ENCODE measurements at regions of chr2 and their contacts with region 1.

Region 1: DNA sequence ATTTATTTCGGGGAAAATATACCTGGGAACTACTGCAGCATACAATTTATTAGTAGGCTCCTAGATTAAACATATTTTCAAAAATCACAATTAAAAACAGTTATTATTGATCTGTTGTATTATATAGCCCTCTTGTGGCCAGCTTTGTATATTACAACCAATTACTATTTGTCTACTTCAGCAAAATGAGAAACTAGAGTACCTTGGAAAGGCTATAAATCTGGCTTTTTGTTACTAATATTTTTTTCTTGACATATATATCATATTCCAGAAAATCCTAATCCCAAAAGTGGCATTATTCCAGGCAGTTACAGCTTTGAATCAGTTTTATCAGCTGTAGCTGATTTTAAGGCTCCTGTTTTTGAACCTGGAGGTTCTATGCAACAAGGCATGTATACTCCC is 101.2 kb downstream of the UBR3 start:
- DNase-seq: no peak
- H3K4me3 ChIP-seq: no peak overlapping the region
- H3K27ac ChIP-seq: no peak overlapping the region
- H3K4me1 ChIP-seq: no peaks in the 10 kb centered on the region
- H3K27me3 ChIP-seq: no peaks in the 10 kb centered on the region
- CTCF ChIP-seq: peak; percentile 48 to 77 (median 71)
- POLR2A ChIP-seq: no peak

Region 2: DNA sequence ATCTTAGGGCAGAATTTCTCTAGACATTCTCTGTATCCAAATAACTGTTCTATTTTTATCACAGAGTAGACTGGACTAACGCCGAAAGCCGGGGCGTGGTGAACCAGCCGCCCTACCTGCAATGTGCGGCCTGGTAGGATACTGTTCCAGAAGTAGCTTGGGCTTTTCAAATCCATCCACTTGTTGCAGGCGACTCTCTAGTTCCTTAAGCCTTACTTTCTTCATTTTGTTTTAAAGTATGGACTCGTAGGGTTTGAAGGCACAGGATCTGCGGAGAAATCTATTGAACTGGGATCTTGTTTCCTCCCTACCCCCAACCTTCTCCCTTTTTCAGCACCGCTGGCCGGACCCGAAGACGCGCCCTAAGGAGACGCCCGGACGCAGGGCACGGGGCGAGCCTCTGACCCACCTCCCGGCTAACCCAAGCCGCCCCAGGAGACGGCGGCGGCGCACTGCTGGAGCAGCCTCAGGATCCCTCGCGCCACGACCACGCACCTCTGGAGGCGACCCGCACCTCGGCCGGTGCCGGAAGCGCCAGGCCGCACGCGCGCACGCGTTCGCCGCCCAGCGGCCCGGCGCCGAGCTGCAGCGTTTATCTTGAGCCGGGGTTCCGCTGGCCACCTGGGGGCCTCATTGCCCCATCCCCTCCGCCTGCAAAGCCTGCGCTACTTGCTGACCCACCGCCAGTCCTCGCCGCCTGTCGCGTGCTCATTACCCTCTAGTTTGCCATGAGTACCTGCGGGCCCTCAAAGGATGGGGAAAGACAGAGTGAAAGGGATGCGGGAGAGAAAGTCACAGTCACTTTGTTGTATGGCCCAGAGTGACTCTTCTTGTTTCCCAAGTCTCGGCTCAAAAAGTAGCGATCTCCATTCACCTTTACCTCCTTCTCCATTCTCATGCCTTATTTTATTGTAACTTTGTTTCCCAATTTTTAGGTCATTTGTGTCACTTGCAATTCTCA is 103.8 kb before region 1 on chr2 and contains the start of gene METTL5:
- intact Hi-C with region 1: loop called (anchors 10 kb)
- DNase-seq: no peak
- H3K4me3 ChIP-seq: peak within 1 kb of the TSS; percentile 60 to 91 (median 86)
- H3K27ac ChIP-seq: peak within 1 kb of the TSS; percentile 80 to 91 (median 86)
- H3K4me1 ChIP-seq: peaks cover 22 to 71% (median 28%) of the 10 kb centered on the region in 3 donors
- H3K27me3 ChIP-seq: no peaks in the 10 kb centered on the region
- CTCF ChIP-seq: peak; percentile 84 to 97 (median 90)
- POLR2A ChIP-seq: peak in 2 of 4 donors; percentile 61 to 77
- total RNA-seq, gene METTL5: 22.9 to 56.3 (median 44.7) TPM